HepG2 (cell line): ENCODE measurements at regions of chr9 and their contacts with region 1.

Region 1: DNA sequence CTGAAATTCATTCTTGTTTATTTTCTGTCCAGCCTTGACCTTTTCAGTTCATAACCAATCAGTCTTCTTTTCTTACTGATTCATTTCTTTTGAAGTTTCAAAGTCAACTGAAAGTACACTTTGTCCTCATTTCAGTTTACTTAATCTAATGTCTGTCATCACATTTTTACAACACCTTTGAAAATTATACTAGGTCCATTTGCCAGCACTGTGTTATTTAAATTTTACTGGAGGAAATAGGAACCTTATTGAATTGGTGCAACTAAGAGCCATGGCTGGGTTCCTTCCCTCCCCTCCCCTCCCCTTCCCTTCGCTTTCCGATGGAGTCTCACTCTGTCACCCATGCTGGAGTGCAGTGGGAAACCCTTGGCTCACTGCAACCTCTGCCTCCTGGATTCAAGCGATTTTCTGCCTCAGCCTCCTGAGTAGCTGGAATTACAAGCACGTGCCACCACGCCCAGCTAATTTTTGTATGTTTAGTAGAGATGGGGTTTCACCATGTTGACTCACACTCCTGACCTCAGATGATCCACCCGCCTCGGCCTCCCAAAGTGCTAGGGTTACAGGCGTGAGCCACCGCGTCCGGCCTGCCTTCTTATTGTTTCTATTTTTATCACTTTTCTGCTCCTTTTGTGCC is 6.3 kb downstream of the RMI1 start:
- DNase-seq: peak; percentile 80
- ATAC-seq: peak; percentile 95
- H3K4me3 ChIP-seq: peak overlapping the region; percentile 19 to 38 (median 38); a peak in 4 of 6 replicates
- H3K27ac ChIP-seq: peak overlapping the region; percentile 90
- H3K4me1 ChIP-seq: peaks cover 74% of the 10 kb centered on the region
- H3K27me3 ChIP-seq: no peaks in the 10 kb centered on the region
- CTCF ChIP-seq: no peak
- EP300 ChIP-seq: peak in 1 of 2 experiments; percentile 73; a peak in 2 of 4 replicates
- POLR2A ChIP-seq: peak in 1 of 2 experiments; percentile 30; a peak in 1 of 4 replicates
- RAD21 ChIP-seq: no peak

Region 2: DNA sequence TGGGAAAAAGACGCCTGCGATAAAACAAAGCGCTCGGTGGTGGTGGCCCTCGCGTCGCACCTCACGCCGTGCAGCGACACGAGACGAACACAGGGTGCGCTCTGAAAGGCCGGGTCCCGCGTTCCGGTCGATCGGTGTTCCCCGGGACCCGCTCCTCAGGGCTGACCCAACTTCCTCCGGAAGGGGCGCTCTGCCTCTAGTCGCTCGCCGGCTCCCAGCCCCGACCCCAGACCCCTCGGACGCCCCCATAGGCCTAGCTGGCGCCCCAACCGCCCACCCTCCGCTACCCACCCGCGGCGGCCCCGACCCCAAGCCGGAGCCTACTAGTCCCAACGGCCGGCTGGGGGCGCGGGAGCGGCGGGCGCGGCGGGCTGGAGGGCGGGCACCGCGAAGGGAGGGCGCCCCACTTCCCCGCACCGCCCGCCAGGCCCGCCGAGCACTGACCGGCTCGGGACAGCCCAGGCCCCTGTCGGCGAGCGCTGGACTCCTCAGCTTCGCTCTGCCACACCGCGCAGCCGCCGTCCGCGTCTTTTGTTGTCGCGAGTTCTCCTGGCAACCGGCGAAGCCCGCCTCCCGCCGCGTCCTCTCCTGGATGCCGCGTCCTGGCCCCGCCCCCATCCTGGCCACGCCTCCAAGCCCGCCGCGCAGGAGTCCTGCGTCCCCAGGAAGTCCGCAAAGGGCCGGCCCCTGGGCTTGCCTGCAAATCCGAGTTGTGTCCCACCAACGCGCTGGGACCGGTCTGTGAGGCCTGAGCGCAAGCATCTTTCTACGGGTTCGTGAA is 65.8 kb before region 1 on chr9 and contains the start of gene KIF27:
- CTCF ChIA-PET with region 1: no interaction called
- POLR2A ChIA-PET with region 1: interaction called, 3 read pairs
- in situ Hi-C with region 1: no loop called
- intact Hi-C with region 1: loop called (anchors 2 kb)
- DNase-seq: peak; percentile 92
- ATAC-seq: peak; percentile 96
- H3K4me3 ChIP-seq: peak within 1 kb of the TSS; percentile 63 to 70 (median 68)
- H3K27ac ChIP-seq: peak within 1 kb of the TSS; percentile 95
- H3K4me1 ChIP-seq: peaks cover 16% of the 10 kb centered on the region
- H3K27me3 ChIP-seq: no peaks in the 10 kb centered on the region
- CTCF ChIP-seq: peak; percentile 53
- EP300 ChIP-seq: no peak; a peak in 1 of 4 replicates
- POLR2A ChIP-seq: peak; percentile 90 to 98
- RAD21 ChIP-seq: no peak; the same call in none of the 2 replicates
- total RNA-seq, gene KIF27: 4.1 and 4.4 TPM in 2 replicates

Region 3: DNA sequence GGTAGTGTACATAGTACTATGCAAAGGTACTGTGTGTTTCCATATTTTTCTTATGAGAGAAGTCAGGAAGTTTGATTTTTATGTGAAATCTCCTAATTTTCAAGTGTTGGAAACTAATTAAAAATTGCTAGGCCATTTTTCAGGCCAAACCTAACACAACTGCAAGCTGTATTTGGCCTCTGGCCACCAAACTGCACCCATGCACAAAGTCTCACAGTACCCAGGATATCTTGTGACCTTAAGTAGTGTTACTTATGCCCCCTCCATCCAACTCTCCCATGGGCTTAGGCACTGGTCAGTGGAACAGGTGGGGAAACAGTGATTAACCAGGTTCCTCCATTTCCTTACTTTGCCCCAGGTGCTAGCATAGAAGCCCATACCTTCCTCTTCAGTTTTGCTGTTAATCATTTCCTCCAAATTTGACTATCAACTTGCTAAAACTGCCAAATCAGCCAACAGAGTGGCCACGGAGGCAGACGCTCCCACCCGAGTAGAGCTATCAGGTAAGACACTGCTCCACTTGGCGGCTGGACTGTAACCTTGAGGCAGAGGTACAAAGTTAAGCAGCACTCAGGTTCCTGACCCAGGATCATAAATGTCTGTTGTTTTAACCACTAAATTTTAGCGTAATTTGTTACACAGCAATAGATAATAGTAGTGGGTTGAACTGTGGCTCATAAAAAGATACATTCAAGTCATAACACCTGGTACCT is 46.1 kb before region 1 on chr9:
- CTCF ChIA-PET with region 1: no interaction called
- POLR2A ChIA-PET with region 1: no interaction called
- in situ Hi-C with region 1: no loop called
- intact Hi-C with region 1: no loop called
- DNase-seq: no peak
- ATAC-seq: no peak
- H3K4me3 ChIP-seq: no peak overlapping the region
- H3K27ac ChIP-seq: no peak overlapping the region
- H3K4me1 ChIP-seq: no peaks in the 10 kb centered on the region
- H3K27me3 ChIP-seq: no peaks in the 10 kb centered on the region
- CTCF ChIP-seq: no peak
- EP300 ChIP-seq: no peak
- POLR2A ChIP-seq: no peak
- RAD21 ChIP-seq: no peak